Right ventricle myocardium inferior (tissue), 1 donor: ENCODE measurements at regions of chr18 and their contacts with region 1.

Region 1: DNA sequence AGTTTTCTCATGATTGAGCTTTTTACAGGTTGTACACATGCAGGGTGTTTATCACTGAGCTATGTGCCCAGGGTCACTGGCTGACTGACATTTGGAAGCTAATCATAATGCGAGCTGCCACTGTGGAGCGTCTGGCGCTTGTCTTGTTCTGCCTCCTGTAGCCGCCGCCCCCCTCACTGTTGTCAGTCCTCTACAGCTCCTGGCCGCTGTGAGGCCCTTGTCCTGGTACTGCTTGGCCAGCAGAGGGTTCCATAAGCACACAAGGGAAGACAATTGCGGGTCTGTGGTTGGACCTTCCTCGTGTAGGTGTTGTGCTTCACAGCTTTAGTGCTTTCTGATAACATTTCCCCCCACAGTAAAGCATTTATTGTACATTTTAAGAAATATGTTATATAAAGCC is 105.6 kb upstream of the LDLRAD4 start:
- DNase-seq: peak; percentile 83
- ATAC-seq: peak; percentile 98

Region 2: DNA sequence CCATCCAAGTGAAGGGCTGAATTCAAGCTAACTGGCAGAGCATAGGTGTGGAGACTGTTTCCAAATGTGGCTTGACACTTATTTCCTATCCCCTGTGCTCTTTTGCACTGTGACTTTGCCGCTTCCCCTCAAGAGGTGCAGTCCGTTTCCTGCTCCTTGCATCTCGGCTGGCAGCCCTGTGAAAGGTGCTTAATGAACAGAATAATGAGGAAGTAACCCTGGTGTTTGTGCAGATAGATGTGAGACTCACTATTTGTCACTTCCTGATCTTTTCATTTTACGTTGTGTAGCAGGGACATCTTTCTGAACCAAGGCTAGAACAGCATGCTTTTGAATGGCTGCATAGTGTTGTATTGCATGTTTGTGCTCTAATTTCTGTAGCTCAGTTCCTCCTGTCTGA is 61.0 kb before region 1 on chr18:
- intact Hi-C with region 1: no loop called
- DNase-seq: no peak
- ATAC-seq: no peak

Region 3: DNA sequence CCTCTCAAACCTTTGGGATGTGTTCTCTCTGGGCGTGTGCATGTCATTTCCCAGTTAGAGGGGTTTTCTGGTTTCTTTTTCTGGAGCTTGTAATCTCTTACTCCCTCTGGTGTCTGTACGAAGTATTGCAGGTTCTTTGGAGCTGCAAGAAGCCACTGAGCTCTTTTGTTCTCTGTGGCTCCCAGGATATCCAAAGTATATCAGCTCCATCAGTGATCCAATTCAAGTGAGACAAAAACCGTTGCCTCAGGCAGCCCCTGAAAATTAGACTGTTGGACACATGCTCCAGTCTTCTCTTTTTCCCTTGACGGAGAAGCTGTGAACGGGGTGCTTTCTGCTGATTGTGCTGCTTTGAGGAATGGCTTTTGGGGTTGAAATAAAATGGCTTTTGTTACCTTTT is 46.6 kb after region 1 on chr18:
- intact Hi-C with region 1: loop called (anchors 5 kb)
- DNase-seq: no peak
- ATAC-seq: peak; percentile 28

Region 4: GRCh38 chr18:13530879-13531387 is 418.0 kb after region 1 on chr18:
- intact Hi-C with region 1: loop called (anchors 10 kb)
- DNase-seq: peak; percentile 77
- ATAC-seq: peak; percentile 88

Region 5: DNA sequence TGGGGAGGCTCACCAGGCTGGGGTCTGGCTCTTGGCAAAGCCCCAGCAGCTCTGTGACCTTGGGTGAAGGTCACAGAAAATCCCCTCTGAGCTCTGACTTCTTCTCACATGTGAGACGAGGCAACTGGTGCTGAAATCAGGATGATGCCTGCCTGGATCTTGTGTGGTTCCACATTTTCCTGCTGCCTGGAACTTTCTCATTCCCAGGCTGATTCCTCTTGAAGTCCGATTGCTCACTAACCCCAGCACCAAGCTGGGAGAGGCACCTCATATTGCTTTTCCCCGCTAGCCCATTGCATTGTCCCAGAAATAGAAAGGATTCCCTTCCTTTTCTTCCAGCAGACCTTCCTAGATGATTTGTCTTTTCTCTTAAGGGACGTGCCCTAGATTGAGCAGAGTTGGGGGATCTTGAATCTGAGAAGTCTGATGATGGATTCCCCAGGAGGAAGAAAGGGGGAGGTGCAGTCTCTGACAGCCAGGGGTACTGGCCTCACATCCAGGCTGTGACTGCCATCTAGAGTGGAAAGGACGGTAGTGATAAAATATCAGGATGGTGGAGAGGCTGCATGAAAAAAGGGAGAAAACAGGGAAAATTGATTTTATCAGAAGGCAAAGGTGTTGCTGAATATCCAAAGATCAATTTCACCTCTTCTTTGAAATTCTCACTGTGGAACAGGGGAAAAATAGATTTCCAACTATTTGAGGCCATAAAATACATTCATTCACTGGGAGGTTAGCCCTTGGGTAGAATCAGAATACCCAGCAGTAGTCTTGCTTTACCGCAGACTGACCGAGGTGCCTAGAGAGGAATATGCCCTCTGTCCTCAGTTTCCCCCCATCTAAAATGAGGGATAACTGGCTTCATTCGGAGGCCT is 517.1 kb after region 1 on chr18:
- intact Hi-C with region 1: loop called (anchors 10 kb)
- DNase-seq: peak; percentile 50
- ATAC-seq: peak; percentile 84